ENCODE measurements at regions of chr11 and their contacts with region 1.

Region 1: GRCh38 chr11:96424693-96425092 is 34.9 kb downstream of the JRKL start:
- DNase-seq: no peak
- ATAC-seq: no peak
- H3K4me3 ChIP-seq: no peak overlapping the region
- H3K27ac ChIP-seq: no peak overlapping the region
- H3K4me1 ChIP-seq: 0 out of 2 replicates have a peak, but pooled peaks cover 3% of the 10 kb centered on the region
- H3K27me3 ChIP-seq: no peaks in the 10 kb centered on the region; the same call in 1 of the 2 replicates
- CTCF ChIP-seq: no peak

Region 2: DNA sequence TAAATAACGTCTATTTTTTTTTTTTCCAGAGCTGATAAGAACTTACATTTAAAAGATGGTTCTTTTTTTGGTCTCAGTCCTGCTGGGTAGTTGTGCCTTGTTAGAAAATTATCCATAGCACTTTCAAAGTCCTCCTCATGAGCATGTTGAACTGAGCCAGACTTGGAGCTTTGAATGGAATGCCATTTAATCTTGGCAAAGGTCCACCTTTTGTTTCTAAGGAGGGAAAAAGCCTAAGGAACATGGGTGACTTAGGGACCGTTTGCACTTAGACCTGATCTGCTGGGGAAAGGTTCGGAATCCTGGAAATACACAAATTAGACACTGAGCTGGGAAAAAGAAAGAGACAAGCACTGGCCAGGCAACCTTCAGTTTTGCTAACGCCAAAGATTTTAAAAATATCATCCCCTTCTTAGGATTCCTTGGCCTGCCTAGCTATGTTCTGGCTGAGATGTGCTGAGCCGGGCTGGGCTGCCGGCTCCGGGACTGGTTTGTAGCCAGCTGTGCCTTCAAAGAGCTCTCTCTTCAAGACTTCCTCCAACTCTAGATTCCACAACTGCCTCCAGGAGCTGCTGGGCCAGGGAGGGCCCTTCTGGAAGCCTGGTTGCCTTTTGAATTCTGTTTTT is 1267.7 kb before region 1 on chr11:
- CTCF ChIA-PET with region 1: no interaction called
- POLR2A ChIA-PET with region 1: no interaction called
- in situ Hi-C with region 1: no loop called
- intact Hi-C with region 1: loop called (anchors 5 kb)
- DNase-seq: no peak
- ATAC-seq: no peak
- H3K4me3 ChIP-seq: no peak overlapping the region
- H3K27ac ChIP-seq: no peak overlapping the region
- H3K4me1 ChIP-seq: no peaks in the 10 kb centered on the region
- H3K27me3 ChIP-seq: no peaks in the 10 kb centered on the region
- CTCF ChIP-seq: no peak

Region 3: GRCh38 chr11:95790123-95790932 is 634.4 kb before region 1 on chr11 and contains the start of gene CEP57:
- CTCF ChIA-PET with region 1: interaction called, 3 read pairs
- POLR2A ChIA-PET with region 1: no interaction called
- in situ Hi-C with region 1: no loop called
- intact Hi-C with region 1: loop called (anchors 5 kb)
- DNase-seq: peak; percentile 95
- ATAC-seq: peak; percentile 89
- H3K4me3 ChIP-seq: peak within 1 kb of the TSS; percentile 90 to 99
- H3K27ac ChIP-seq: peak within 1 kb of the TSS; percentile 97
- H3K4me1 ChIP-seq: peaks cover 27% of the 10 kb centered on the region
- H3K27me3 ChIP-seq: no peaks in the 10 kb centered on the region
- CTCF ChIP-seq: no peak
- total RNA-seq, gene CEP57: 50.3 TPM

Region 4: GRCh38 chr11:95835768-95836488 is 588.8 kb before region 1 on chr11:
- CTCF ChIA-PET with region 1: interaction called, 4 read pairs
- POLR2A ChIA-PET with region 1: no interaction called
- in situ Hi-C with region 1: no loop called
- intact Hi-C with region 1: loop called (anchors 1 kb)
- DNase-seq: peak; percentile 58
- ATAC-seq: peak; percentile 96
- H3K4me3 ChIP-seq: no peak overlapping the region
- H3K27ac ChIP-seq: no peak overlapping the region
- H3K4me1 ChIP-seq: 0 out of 2 replicates have a peak, but pooled peaks cover 4% of the 10 kb centered on the region
- H3K27me3 ChIP-seq: no peaks in the 10 kb centered on the region
- CTCF ChIP-seq: peak; percentile 95

Region 5: GRCh38 chr11:96155627-96156378 is 268.9 kb before region 1 on chr11:
- CTCF ChIA-PET with region 1: interaction called, 10 read pairs
- POLR2A ChIA-PET with region 1: no interaction called
- in situ Hi-C with region 1: no loop called
- intact Hi-C with region 1: no loop called
- DNase-seq: no peak
- ATAC-seq: peak; percentile 41; the same call in 1 of the 2 replicates
- H3K4me3 ChIP-seq: no peak overlapping the region
- H3K27ac ChIP-seq: no peak overlapping the region; the same call in 1 of the 2 replicates
- H3K4me1 ChIP-seq: peaks cover 6% of the 10 kb centered on the region
- H3K27me3 ChIP-seq: no peaks in the 10 kb centered on the region
- CTCF ChIP-seq: peak; percentile 14